Activated T-helper 1 cell treated with anti-CD3 and anti-CD28 coated beads, Interleukin-12 subunit alpha, Interleukin-12 subunit beta, Interleukin-2, Interleukin-4 antibody, amounts not matched to agents 30 ng/mL and 10 ng/mL and 1 ng/mL, durations not matched to agents 14 hours and 24 hours and 36 hours (primary cell): ENCODE measurements at regions of chr5 and their contacts with region 1.

Region 1: DNA sequence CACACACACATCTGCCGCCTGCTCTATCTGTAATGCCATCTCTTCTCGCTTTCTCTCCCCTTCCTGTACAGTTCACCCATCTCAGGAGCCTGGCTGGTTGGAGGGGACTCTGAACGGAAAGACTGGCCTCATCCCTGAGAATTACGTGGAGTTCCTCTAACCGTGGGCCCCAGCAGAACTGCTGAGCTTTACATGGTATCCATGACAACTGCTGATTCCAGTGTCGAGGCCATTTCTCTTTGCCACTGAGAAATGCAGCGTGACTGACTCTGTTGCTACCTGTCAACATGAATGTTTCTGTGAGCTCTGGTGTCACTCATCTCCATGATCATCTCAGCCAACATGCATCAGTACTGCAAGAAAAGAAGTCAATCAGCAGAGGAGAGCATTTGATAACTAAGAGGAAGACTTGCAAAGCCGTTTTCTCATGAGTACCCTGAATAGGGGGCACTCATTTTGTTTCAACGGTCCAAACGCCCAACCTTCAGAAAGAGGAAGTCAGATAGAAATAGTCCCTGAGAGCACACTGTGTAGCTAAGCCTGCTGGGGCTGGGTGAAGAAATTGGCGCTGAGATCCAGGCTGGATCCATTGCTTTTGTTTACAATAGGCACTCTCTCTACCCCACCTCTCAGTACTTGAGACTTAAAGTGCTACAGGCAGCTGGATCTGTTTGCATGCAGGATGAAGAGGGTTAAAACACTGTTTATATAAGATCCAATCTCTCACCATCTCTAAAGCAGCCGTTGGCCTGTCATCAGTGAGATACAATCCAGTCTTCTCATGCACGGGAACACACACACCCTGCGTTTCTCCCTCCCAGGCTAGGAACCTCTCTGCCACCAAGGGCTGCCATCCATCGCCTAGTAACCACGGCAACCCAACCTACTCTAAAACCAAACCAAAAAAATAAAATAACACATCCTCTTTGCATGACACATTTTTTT is 180.9 kb downstream of the NR3C1 start:
- DNase-seq: peak; percentile 59
- H3K4me3 Mint-ChIP-seq: peak overlapping the region; percentile 60
- H3K27ac Mint-ChIP-seq: peak overlapping the region; percentile 92
- H3K4me1 Mint-ChIP-seq: peaks cover 77% of the 10 kb centered on the region
- H3K27me3 Mint-ChIP-seq: no peaks in the 10 kb centered on the region

Region 2: DNA sequence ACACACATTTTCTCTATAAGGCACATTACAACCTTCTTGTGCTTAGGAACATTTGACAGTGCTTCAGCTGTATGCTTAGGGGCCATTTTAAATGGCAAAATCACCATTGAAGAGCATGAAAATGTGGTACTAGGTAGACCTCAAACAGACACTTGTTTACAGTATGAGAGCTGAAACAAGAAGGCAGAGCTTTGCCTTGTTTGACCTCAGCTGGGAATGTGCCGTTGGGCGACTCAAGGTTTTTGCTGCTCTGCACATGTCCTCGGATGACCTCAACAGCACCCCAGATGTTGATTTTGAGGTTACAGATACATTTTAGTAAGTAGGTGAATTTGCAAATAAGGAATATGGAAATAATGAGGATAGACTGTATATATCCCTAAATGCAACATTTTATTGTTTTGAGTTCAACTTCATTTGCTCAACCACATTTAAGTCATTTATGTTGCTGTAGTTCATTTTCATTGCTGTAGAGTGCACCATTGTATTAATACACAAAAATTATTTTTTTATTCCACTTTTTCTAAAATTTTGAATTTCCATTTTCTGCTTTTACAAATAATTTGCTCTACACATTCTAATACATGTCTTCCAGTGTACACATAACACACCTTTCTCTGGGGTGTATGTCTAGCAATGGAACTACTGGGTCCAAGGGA is 25.8 kb before region 1 on chr5:
- intact Hi-C with region 1: loop called (anchors 1 kb)
- DNase-seq: no peak
- H3K4me3 Mint-ChIP-seq: peak overlapping the region; percentile 30
- H3K27ac Mint-ChIP-seq: peak overlapping the region; percentile 77
- H3K4me1 Mint-ChIP-seq: peaks cover 30% of the 10 kb centered on the region
- H3K27me3 Mint-ChIP-seq: no peaks in the 10 kb centered on the region

Region 3: DNA sequence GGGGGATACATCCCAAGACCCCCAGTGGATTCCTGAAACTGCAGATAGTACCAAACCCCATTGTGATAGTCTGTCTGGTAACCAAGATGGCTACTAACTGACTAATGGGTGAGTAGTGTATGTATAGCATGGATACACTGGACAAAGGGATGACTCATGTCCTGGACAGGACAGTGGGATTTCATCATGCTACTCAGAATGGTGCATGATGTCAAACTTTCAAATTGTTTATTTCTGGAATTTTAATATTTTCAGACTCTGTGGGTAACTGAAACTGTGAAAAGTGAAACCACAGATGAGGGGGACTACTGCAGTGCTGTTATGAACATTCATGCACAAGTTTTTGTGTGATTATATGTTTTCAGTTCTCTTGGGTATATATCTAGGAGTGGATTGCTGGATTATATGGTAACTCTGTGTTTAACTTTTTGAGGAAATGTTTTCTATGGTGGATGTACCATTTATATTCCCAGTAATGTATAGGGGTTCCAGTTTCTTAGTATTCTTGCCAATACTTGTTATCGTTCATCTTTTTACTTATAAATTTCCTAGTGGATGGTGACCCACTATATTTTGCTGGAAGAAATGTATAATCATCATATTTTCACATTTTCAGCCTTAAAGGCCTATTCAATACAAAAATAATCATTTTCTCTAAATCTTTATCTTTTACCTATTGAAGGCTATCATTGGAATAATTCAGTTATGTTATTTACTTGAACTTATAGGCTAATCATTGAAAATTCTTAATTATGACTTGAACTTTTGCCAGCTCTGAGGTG is 40.0 kb after region 1 on chr5:
- intact Hi-C with region 1: loop called (anchors 5 kb)
- DNase-seq: no peak
- H3K4me3 Mint-ChIP-seq: no peak overlapping the region
- H3K27ac Mint-ChIP-seq: no peak overlapping the region
- H3K4me1 Mint-ChIP-seq: peaks cover 21% of the 10 kb centered on the region
- H3K27me3 Mint-ChIP-seq: no peaks in the 10 kb centered on the region

Region 4: GRCh38 chr5:143557061-143557818 is 334.7 kb after region 1 on chr5:
- intact Hi-C with region 1: no loop called
- DNase-seq: no peak
- H3K4me3 Mint-ChIP-seq: no peak overlapping the region
- H3K27ac Mint-ChIP-seq: no peak overlapping the region
- H3K4me1 Mint-ChIP-seq: peaks cover 24% of the 10 kb centered on the region
- H3K27me3 Mint-ChIP-seq: no peaks in the 10 kb centered on the region